GM13976 (cell line): ENCODE measurements at regions of chr2 and their contacts with region 1.

Region 1: DNA sequence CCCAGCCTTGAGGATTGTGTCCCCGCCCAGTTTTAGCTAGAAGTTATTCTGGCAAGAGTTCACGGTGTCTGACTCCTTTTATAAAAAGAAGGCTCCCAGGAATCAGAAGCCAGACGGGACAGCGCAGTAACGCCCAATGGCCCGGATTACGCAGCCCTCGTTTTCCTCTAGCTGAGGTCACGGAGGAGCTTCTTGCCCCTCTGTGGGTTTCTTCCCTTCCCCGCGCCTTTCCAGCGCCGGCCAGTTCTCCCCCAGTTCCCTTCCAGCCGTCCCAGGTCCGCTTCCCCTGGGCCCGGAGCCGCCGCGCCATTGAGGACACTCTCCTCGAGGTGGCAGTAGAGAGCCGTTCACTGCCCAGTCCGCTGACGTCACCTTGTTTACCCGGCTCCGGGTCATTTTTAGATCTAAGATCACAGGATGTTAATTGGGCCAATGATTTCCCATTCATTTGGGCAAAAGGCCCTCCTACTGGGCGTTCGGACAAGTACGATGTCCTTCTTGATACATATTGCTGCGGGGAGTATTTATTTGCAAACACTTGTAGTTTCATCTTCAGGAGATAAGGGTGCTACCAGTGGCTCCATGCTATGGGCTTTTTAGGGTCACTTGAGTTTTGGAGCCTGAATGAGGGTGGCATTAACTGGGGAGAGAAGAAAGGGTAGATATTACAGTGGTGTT is 81.5 kb upstream of the PPM1B start:
- DNase-seq: peak; percentile 85
- CTCF ChIP-seq: peak; percentile 89

Region 2: GRCh38 chr2:44244129-44244871 is 157.1 kb after region 1 on chr2:
- in situ Hi-C with region 1: loop called (anchors 25 kb)
- DNase-seq: peak; percentile 64
- CTCF ChIP-seq: no peak

Region 3: DNA sequence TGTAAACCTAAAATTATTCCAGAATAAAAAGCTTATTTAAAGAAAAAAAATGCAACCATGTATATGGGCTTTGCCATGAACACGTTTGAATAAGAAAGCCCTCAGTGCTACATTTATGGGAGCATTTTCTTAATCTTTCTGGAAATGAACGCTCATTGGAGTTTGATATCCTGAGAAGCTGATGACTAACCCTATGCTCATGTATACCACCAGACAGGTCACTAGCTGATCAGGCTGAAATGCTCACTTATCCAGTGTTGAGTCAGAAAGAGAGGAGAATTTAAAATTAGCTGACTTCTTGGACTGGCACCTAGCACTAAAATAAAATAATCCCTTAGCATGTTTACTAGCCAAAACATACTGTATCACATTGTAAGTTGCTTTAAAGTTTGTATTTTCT is 599.4 kb after region 1 on chr2:
- in situ Hi-C with region 1: no loop called
- DNase-seq: no peak
- CTCF ChIP-seq: no peak